Head of caudate nucleus (tissue), 42 donors: ENCODE measurements at regions of chr7 and their contacts with region 1.

Region 1: GRCh38 chr7:55255496-55256435 is 109.4 kb upstream of the LANCL2 start:
- DNase-seq: peak; percentile 71 to 93 (median 85)

Region 2: DNA sequence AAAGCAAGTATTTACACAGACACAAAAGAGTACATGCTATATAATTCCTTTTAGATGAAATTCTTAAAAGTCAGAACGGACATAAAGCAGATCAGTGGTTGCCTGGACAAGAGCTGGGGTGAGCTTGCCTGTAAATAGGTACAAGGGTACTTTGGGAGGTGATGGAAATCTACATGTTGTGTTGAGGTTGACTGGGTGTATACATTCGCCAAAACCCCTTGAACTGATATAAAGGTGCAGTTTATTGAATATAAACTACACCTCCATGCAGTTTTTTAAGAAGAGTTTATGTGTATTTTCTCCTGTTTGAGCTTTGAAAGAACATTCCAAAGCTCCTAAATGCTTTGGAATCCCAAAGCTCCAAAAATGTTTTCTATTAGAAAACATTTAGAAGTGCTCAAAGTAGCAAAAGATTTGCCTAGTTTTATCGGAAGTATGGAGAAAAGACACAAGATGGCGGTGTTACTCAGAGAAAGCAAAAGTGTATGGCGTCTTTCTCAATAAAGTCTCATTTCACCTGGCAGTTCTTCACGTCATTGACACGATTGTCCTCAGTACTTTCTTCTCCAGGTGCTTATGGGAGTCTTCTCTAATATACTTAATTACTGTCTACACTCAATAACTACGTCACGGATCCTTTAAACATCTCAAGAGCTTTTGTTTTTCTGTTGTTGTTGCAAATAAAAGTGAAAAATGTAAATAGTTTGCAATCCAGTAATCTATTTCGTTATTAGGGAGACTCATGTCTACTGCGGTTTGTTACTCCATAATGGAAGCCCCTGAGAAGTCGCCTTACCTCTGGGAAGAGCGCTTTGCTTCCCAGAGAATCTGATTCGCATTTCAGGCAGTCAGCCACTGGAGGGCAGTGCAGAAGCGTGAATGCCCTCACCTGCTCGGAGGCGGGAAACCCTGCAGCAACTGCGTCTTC is 482.0 kb before region 1 on chr7:
- intact Hi-C with region 1: loop called (anchors 5 kb)
- DNase-seq: peak; percentile 73 to 94 (median 86)

Region 3: DNA sequence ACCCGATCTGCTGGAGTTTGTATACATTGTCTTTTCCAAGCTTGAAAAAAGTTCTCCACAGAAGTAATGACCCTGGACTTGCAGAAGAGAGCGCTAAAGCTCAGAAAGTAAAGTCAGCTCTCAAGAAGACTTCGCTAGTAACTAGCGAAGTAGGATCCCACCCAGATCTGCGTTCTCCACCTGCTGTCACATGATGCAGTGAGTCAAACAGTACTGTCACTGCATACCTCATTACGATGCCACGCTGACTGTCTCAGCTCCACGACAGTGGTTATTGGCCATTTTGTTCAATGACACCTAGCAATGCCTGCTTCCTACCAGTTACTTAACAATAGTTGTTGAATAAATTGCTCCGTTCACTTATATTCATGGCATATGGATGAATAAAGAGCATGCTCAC is 467.1 kb before region 1 on chr7:
- intact Hi-C with region 1: loop called (anchors 5 kb)
- DNase-seq: peak in 40 of 42 donors; percentile 7 to 86 (median 56)

Region 4: DNA sequence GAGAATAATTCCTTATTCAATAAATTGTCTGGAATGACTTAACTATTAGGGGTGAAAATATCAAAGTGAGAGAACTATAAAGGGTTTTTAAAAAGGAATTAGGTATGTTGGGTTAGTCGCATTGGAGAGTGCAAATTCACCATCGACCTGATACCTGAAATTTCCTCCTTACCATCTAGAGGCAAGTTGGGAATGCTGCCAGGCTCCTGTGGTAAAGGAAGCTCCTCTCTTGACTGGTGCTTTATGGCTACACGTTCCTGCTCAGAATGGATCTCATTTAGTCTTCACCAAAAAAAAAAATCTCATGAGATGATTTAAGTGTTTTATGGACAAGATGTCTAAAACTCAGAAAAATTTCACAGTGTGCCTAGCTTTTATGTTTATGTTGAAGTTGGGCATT is 107.2 kb before region 1 on chr7:
- intact Hi-C with region 1: no loop called
- DNase-seq: no peak

Region 5: GRCh38 chr7:55288070-55288824 is 32.5 kb after region 1 on chr7:
- intact Hi-C with region 1: no loop called
- DNase-seq: no peak

Region 6: GRCh38 chr7:55304018-55304762 is 48.4 kb after region 1 on chr7:
- intact Hi-C with region 1: no loop called
- DNase-seq: no peak